KBM-7 (cell line): ENCODE measurements at regions of chr2 and their contacts with region 1.

Region 1: DNA sequence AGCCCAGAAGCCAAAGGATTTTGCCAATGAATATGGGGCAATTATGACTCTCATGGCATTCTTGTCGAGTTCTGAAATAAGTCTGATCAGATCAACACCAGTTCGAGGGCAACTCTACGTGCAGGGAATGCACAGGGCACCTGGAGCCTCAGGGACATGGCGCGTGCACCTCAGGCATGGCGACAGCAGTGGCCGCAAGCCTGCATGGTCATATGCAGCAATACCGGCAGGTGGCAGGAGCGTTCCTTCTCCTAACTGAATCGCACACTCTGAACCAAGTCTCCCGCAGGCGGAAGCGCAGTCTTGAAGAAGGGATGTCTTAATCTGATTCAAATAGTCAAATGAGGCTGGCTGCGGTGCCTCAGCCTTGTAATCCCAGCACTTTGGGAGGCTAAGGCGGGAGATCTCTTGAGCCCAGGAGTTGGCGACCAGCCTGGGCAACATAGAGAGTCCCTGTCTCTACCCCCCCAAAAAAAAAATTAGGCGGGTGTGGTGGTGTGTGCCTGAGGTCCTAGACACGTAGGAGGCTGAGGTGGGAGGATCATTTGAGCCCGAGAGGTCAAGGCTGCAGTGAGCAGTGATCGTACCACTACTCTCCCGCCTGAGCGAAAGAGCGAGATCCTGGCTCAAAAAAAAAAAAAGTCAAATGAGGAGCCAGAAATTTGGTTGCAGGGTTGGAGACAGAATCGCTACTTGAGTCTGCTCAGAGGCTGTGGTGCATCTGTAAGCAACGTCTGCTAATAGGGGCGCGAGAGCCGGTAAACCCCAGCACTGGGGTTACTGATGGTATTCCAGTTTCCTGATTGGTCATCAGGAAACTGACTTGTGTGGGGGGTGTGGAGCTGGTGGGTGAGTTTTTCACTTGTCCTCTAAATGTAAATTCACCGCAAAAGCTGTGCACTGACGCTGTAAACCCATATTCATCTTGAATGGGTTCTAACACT is 28.8 kb downstream of the FHL2 start:
- DNase-seq: peak; percentile 90

Region 2: GRCh38 chr2:105517814-105518705 is 148.0 kb after region 1 on chr2:
- in situ Hi-C with region 1: no loop called
- DNase-seq: no peak

Region 3: GRCh38 chr2:105545730-105546627 is 176.0 kb after region 1 on chr2:
- in situ Hi-C with region 1: loop called (anchors 25 kb)
- DNase-seq: peak; percentile 68

Region 4: GRCh38 chr2:106582148-106583143 is 1212.4 kb after region 1 on chr2:
- in situ Hi-C with region 1: loop called (anchors 25 kb)
- DNase-seq: peak; percentile 77